Activated naive CD8-positive, alpha-beta T cell treated with anti-CD3 and anti-CD28 coated beads, Interleukin-2, amount 10 ng/mL, durations not matched to agents 7 days and 5 days (primary cell): ENCODE measurements at regions of chr2 and their contacts with region 1.

Region 1: GRCh38 chr2:219010162-219010756 is 17.0 kb upstream of the CRYBA2 start:
- DNase-seq: no peak
- ATAC-seq: peak; percentile 45
- H3K4me3 Mint-ChIP-seq: no peak overlapping the region
- H3K27ac Mint-ChIP-seq: no peak overlapping the region
- H3K4me1 Mint-ChIP-seq: no peaks in the 10 kb centered on the region
- H3K27me3 Mint-ChIP-seq: peaks cover 25% of the 10 kb centered on the region

Region 2: GRCh38 chr2:219020604-219021365 is 10.5 kb after region 1 on chr2:
- POLR2A ChIA-PET with region 1: no interaction called
- DNase-seq: no peak
- ATAC-seq: no peak
- H3K4me3 Mint-ChIP-seq: no peak overlapping the region
- H3K27ac Mint-ChIP-seq: no peak overlapping the region
- H3K4me1 Mint-ChIP-seq: no peaks in the 10 kb centered on the region
- H3K27me3 Mint-ChIP-seq: peaks cover 7% of the 10 kb centered on the region

Region 3: GRCh38 chr2:219041252-219041651 is 31.0 kb after region 1 on chr2 and contains the start of gene CFAP65:
- POLR2A ChIA-PET with region 1: interaction called, 13 read pairs
- DNase-seq: no peak
- ATAC-seq: no peak
- H3K4me3 Mint-ChIP-seq: peak within 1 kb of the TSS; percentile 1
- H3K27ac Mint-ChIP-seq: no peak within 1 kb of the TSS
- H3K4me1 Mint-ChIP-seq: peaks cover 4% of the 10 kb centered on the region
- H3K27me3 Mint-ChIP-seq: peaks cover 35% of the 10 kb centered on the region
- total RNA-seq, gene CFAP65: not detected

Region 4: GRCh38 chr2:219057709-219058540 is 47.7 kb after region 1 on chr2:
- POLR2A ChIA-PET with region 1: no interaction called
- DNase-seq: peak; percentile 87
- ATAC-seq: peak; percentile 90
- H3K4me3 Mint-ChIP-seq: peak overlapping the region; percentile 58
- H3K27ac Mint-ChIP-seq: no peak overlapping the region
- H3K4me1 Mint-ChIP-seq: peaks cover 14% of the 10 kb centered on the region
- H3K27me3 Mint-ChIP-seq: peaks cover 65% of the 10 kb centered on the region

Region 5: DNA sequence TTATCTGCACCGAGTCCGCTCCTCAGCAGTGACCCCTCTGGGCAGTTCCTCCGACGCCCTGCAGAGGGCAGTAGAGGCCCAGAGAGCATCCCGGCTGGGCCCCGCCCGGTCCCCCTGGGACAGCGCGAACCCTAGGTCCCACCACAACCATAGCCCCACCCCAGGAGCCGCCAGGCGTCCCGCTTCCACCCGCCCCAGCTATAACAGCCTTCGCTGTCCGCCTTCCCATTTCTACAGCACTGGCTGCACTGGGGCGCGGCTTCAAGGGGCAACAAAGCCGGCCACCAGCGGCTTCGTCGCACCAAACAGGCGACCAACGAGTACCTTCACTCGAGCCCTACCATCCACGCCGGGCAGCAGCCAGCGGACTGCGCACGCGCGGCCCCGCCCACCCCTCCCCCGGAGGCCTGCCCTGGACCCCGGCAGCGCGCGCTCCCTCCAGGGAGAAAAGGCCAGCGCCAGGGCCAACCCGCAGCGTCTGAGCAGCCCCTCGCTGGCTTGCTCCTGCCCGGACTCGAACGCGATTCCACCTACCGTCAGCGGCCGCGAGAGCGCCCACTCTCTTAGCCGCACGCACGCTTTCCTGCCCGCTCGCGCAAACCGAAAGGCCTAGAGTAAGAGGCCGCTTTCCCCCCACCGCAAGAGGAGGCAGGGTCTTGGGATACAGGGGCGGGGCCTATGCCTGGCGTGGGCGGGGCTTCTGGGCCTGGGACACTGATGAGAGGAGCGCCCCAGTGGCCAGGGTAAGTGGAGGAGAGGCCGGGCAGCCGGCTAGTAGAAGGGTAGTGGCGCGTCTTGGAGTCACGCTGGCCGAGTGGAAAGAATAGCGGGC is 150.1 kb after region 1 on chr2 and contains the start of gene NHEJ1:
- POLR2A ChIA-PET with region 1: no interaction called
- DNase-seq: peak; percentile 96
- ATAC-seq: peak; percentile 92
- H3K4me3 Mint-ChIP-seq: peak within 1 kb of the TSS; percentile 85
- H3K27ac Mint-ChIP-seq: peak within 1 kb of the TSS; percentile 96
- H3K4me1 Mint-ChIP-seq: peaks cover 15% of the 10 kb centered on the region
- H3K27me3 Mint-ChIP-seq: no peaks in the 10 kb centered on the region
- total RNA-seq, gene NHEJ1: 16.7 to 17.1 TPM